Sigmoid colon (tissue), 7 donors: ENCODE measurements at regions of chr10 and their contacts with region 1.

Region 1: DNA sequence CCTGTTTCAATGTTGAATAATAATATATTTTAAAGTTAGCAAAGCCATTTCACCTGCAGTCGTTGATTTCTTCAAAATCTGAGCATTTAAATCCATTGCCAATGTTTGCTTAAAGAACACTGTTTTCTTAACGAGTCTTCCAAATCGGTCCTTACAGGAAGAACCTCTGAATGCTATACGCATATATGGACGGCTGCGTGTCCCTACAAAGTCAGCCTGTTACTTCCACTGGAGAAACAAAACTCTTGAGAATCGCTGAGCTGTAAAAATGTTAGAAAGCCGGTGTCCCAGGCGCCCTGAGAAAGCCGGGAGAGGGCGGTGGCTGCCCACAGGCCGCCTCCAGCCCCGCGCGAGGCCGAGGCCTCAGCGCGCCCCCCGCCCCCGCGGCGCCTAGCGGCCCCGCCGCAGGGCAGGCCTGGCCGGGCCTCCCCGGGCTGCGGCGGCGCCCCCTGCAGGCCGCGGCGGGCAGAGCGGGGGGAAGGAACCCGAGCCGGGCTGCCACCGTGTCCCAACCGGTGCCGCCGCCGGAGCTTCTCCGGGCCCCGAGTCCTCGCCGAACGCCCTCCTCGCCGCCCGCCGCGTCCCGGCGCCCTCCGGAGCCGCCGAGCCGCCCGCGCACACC is at the start of gene FHIP2A:
- DNase-seq: peak; percentile 82
- H3K4me3 ChIP-seq: peak within 1 kb of the TSS; percentile 81 to 99 (median 88)
- H3K27ac ChIP-seq: peak within 1 kb of the TSS; percentile 92 to 98 (median 98)
- H3K4me1 ChIP-seq: peaks cover 0 to 41% (median 37%) of the 10 kb centered on the region in 4 donors
- H3K27me3 ChIP-seq: no peaks in the 10 kb centered on the region
- CTCF ChIP-seq: peak in 1 of 4 experiments; percentile 54
- EP300 ChIP-seq: no peak
- POLR2A ChIP-seq: no peak
- total RNA-seq, gene FHIP2A: 32.1 to 37.7 (median 36.1) TPM

Region 2: DNA sequence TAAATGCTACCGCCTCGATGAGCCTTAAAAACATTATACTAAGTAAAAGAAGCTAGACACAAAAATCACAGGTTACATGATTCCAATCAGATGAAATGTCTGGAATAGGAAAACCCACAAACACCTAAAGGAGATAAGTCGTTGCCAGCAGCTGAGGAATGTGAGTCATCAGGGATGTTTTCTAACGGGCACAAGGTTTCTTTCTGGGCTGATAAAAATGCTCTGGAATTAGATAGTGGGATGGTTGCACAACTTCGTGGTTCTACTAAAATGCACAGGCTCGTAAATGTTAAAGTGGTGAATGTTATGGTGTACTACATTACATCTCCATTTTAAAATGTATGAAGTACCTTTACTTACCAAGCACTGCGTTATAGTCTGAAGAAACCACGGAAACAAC is 173.0 kb before region 1 on chr10:
- intact Hi-C with region 1: no loop called
- DNase-seq: no peak
- H3K4me3 ChIP-seq: no peak overlapping the region
- H3K27ac ChIP-seq: no peak overlapping the region
- H3K4me1 ChIP-seq: peaks cover 0 to 14% (median 3%) of the 10 kb centered on the region in 4 donors
- H3K27me3 ChIP-seq: no peaks in the 10 kb centered on the region
- CTCF ChIP-seq: no peak
- EP300 ChIP-seq: no peak
- POLR2A ChIP-seq: no peak

Region 3: DNA sequence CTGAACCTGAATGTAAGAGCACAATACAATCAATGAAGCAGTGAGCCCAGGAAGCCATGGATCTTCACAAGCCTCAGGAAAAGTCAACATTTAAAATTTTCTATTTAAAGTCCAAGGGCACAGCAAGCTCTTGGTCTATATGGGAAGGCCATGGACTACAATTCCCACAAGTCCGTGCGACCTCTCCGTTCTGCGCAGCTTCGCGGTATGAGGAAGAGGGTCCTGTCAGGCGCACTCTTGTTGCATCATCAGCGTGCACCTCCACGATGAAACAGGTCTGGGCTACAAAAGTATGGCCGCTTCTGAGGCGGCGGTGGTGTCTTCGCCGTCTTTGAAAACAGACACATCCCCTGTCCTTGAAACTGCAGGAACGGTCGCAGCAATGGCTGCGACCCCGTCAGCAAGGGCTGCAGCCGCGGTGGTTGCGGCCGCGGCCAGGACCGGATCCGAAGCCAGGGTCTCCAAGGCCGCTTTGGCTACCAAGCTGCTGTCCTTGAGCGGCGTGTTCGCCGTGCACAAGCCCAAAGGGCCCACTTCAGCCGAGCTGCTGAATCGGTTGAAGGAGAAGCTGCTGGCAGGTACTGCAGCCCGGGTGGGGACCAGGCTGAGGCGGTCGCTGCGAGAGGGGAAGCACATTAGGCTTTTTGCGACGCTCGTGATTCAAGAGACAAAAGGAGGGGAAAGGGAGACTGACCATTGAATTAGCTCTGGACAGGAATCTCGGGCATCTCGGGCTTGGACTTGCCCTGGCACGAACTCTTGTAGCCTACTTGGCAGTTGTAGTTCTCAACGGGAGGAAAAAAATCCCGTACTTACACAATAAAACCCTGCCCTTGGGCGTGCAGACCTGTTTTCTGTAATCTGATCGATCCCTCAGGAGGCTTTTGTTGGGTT is 116.8 kb after region 1 on chr10 and contains the start of gene TRUB1:
- intact Hi-C with region 1: loop called (anchors 5 kb)
- DNase-seq: peak; percentile 97
- H3K4me3 ChIP-seq: peak within 1 kb of the TSS; percentile 75 to 88 (median 80)
- H3K27ac ChIP-seq: peak within 1 kb of the TSS; percentile 83 to 89 (median 88)
- H3K4me1 ChIP-seq: peaks cover 0 to 24% (median 17%) of the 10 kb centered on the region in 4 donors
- H3K27me3 ChIP-seq: no peaks in the 10 kb centered on the region
- CTCF ChIP-seq: no peak
- EP300 ChIP-seq: no peak
- POLR2A ChIP-seq: no peak
- total RNA-seq, gene TRUB1: 10.5 to 14.3 (median 12.8) TPM